Mammary epithelial cell (primary cell): ENCODE measurements at regions of chr13 and their contacts with region 1.

Region 1: GRCh38 chr13:79227418-79227817 is 178.6 kb downstream of the RBM26 start:
- DNase-seq: no peak
- H3K4me3 ChIP-seq: no peak overlapping the region
- H3K27ac ChIP-seq: no peak overlapping the region
- H3K4me1 ChIP-seq: peaks cover 16% of the 10 kb centered on the region
- H3K27me3 ChIP-seq: no peaks in the 10 kb centered on the region
- CTCF ChIP-seq: no peak

Region 2: DNA sequence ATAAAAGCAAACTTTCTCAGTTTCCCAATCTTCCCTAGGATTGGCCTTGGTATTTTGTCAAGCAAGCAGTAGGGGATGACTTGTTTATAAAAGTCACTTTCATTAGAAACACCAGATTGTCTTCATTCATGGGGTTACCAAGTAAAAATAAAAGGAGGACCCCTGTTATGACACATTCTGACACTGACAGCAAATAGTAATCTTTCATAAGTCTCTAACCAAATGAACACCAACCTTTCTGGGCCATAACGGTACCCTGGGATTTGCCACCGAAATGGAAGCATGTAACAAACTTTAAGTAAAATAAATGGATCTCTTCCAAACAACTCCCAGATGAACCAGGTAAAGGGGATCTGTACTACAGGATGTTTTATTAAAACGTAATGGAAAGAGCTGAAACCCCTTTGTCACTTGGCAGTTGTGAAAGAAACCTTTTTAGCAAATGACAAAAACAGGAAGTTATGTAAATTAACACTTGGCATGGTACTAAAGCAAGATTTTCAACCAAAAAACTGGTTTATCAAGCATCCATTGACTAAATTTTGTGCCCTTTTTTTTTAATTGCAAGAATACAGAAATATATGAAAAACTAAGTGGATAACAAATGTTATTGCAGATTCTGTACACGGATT is 157.0 kb before region 1 on chr13:
- CTCF ChIA-PET with region 1: no interaction called
- dilution Hi-C with region 1: no loop called
- in situ Hi-C with region 1: no loop called
- intact Hi-C with region 1: no loop called
- DNase-seq: no peak
- H3K4me3 ChIP-seq: no peak overlapping the region
- H3K27ac ChIP-seq: no peak overlapping the region
- H3K4me1 ChIP-seq: no peaks in the 10 kb centered on the region
- H3K27me3 ChIP-seq: peaks cover 2% of the 10 kb centered on the region
- CTCF ChIP-seq: no peak

Region 3: DNA sequence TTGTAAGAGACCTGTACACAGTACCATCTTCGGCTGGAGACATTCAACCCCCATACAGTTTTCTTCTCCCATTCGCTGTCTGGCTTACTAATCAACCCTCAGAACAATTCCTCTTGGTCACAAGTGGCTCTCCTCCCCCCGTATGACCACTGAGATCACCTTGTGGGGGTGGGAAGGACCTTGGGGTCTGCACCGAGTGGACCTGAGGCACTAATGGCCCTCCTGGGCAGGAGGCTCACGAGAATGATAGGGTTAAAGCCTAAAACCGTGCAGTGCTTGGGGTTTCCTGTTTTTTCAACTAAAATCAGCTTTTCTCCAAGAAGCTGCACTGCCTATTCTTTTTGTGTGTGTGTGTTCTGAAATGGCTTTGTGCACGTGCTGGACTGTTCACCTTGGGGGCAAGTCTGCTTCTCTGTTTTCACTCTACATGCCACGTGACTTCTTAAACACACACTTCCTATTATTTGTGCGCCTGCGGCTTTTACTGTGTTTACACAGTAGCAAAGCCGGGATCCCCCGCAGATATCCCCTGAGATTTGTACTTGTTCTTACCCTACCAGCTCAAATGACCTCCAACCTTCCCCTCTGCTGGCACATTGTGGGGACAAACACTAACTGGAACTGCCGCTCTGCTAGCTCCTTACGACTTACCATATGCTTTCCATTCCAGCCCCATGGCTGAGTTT is 166.3 kb after region 1 on chr13:
- CTCF ChIA-PET with region 1: no interaction called
- dilution Hi-C with region 1: no loop called
- in situ Hi-C with region 1: no loop called
- intact Hi-C with region 1: loop called (anchors 10 kb)
- DNase-seq: no peak
- H3K4me3 ChIP-seq: no peak overlapping the region
- H3K27ac ChIP-seq: no peak overlapping the region
- H3K4me1 ChIP-seq: peaks cover 12% of the 10 kb centered on the region
- H3K27me3 ChIP-seq: no peaks in the 10 kb centered on the region
- CTCF ChIP-seq: no peak